H1 (cell line): ENCODE measurements at regions of chr17 and their contacts with region 1.

Region 1: DNA sequence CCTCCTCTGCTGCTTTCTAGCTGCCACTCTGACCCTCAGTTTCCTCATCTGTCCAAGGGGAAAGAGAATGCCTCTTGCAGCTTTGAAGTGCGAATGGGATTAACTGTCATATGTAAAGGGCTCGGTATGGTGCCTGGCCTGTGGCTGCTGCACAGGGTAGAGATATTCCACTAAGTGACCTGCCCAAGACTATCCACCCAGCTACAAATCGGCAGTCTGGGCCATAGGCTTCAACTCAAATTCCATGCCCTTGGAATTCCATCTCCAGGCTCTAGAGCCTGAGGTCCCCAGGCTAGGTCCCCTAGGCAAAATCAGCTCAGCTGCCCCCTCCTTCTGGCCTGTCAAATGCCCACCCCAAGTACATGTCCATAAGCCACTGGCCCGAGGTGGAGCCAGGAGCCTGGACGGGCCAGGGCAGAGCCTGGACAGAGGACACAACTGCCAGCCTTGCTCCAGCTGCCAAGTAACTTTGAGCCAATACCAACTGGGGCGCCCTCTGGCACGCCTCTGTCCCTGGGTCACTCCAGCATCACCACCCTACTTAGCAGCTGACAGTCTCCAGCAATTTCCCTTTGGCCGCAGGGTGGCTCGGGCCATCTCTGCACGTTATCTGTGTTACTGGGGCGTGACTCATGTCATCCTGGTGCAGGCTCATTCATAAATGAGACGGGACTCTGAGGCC is 57.2 kb downstream of the SDK2 start:
- DNase-seq: no peak
- H3K4me3 ChIP-seq: no peak overlapping the region; a peak in 1 of 8 replicates
- H3K27ac ChIP-seq: no peak overlapping the region
- H3K4me1 ChIP-seq: peaks cover 0 to 37% (median 13%) of the 10 kb centered on the region in 4 experiments; a peak in 6 of 7 replicates
- H3K27me3 ChIP-seq: no peaks in the 10 kb centered on the region; a peak in 1 of 7 replicates
- CTCF ChIP-seq: no peak
- EP300 ChIP-seq: no peak
- POLR2A ChIP-seq: no peak
- RAD21 ChIP-seq: no peak; a peak in 1 of 4 replicates

Region 2: GRCh38 chr17:73478768-73479424 is 108.2 kb before region 1 on chr17:
- CTCF ChIA-PET with region 1: interaction called, 14 read pairs
- POLR2A ChIA-PET with region 1: no interaction called
- DNase-seq: peak in 1 of 2 experiments; percentile 65
- H3K4me3 ChIP-seq: no peak overlapping the region
- H3K27ac ChIP-seq: no peak overlapping the region
- H3K4me1 ChIP-seq: peaks cover 0 to 12% (median 4%) of the 10 kb centered on the region in 4 experiments; a peak in 3 of 7 replicates
- H3K27me3 ChIP-seq: peaks cover 0 to 2% (median 0%) of the 10 kb centered on the region in 4 experiments; a peak in 1 of 7 replicates
- CTCF ChIP-seq: peak; percentile 73 to 88 (median 82)
- EP300 ChIP-seq: no peak
- POLR2A ChIP-seq: no peak
- RAD21 ChIP-seq: peak; percentile 67 to 77

Region 3: GRCh38 chr17:73551759-73552158 is 35.3 kb before region 1 on chr17:
- CTCF ChIA-PET with region 1: interaction called, 39 read pairs
- POLR2A ChIA-PET with region 1: no interaction called
- DNase-seq: no peak
- H3K4me3 ChIP-seq: no peak overlapping the region
- H3K27ac ChIP-seq: no peak overlapping the region
- H3K4me1 ChIP-seq: peaks cover 0 to 25% (median 14%) of the 10 kb centered on the region in 4 experiments; a peak in 6 of 7 replicates
- H3K27me3 ChIP-seq: no peaks in the 10 kb centered on the region; a peak in 1 of 7 replicates
- CTCF ChIP-seq: no peak
- EP300 ChIP-seq: no peak
- POLR2A ChIP-seq: no peak
- RAD21 ChIP-seq: no peak

Region 4: GRCh38 chr17:73560661-73561060 is 26.4 kb before region 1 on chr17:
- CTCF ChIA-PET with region 1: interaction called, 39 read pairs
- POLR2A ChIA-PET with region 1: no interaction called
- DNase-seq: no peak
- H3K4me3 ChIP-seq: no peak overlapping the region
- H3K27ac ChIP-seq: no peak overlapping the region
- H3K4me1 ChIP-seq: peaks cover 2 to 24% (median 13%) of the 10 kb centered on the region in 4 experiments
- H3K27me3 ChIP-seq: no peaks in the 10 kb centered on the region
- CTCF ChIP-seq: peak; percentile 29 to 59 (median 56); a peak in 3 of 4 replicates
- EP300 ChIP-seq: no peak
- POLR2A ChIP-seq: no peak
- RAD21 ChIP-seq: peak; percentile 41 to 59; a peak in 3 of 4 replicates

Region 5: GRCh38 chr17:73566905-73567782 is 19.9 kb before region 1 on chr17:
- CTCF ChIA-PET with region 1: interaction called, 15 read pairs
- POLR2A ChIA-PET with region 1: interaction called, 8 read pairs
- DNase-seq: peak; percentile 43 to 70
- H3K4me3 ChIP-seq: peak overlapping the region in 1 of 4 experiments; percentile 41; a peak in 2 of 8 replicates
- H3K27ac ChIP-seq: peak overlapping the region; percentile 79
- H3K4me1 ChIP-seq: peaks cover 13 to 39% (median 22%) of the 10 kb centered on the region in 4 experiments
- H3K27me3 ChIP-seq: no peaks in the 10 kb centered on the region
- CTCF ChIP-seq: no peak; a peak in 1 of 4 replicates
- EP300 ChIP-seq: no peak; a peak in 1 of 3 replicates
- POLR2A ChIP-seq: no peak
- RAD21 ChIP-seq: peak; percentile 14 to 45; a peak in 3 of 4 replicates

Region 6: DNA sequence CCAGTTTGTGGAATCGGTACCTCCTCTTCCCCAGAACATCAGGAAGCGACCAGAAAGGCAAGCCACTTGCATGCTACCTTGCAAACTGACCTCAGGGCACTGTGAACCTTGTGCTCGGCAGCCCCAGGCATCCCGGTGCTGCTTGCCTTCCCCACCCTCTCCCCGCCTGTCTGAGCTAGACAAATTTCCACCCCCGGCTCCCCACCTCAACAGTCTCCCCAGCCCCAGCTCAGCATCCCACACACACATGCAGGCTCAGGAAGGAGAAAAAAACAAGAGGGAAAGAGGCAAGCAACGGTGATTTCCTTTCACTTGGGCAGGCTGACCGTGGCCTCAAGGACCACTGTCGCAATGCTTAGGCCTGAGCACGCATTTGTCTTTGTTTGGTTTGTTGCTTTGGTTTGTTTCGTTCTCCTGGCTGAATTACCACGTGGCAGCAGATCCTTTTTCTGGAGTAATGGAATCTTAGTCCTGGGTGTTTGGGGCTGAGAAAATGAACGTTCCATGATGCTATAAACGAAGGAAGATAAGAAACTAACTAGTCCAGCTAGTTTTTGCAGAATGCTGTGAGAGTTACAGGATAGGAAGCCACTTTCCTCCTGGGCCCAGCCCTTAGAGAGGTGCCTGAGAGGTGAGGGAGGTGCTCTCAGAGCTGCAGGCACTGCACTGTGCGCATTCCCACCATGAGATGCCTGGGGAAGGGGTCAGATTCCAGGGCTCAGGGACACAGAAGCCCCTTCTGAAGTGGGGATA is 29.2 kb after region 1 on chr17:
- CTCF ChIA-PET with region 1: interaction called, 14 read pairs
- POLR2A ChIA-PET with region 1: interaction called, 3 read pairs
- DNase-seq: no peak
- H3K4me3 ChIP-seq: no peak overlapping the region
- H3K27ac ChIP-seq: no peak overlapping the region
- H3K4me1 ChIP-seq: peaks cover 22 to 53% (median 38%) of the 10 kb centered on the region in 4 experiments
- H3K27me3 ChIP-seq: no peaks in the 10 kb centered on the region; a peak in 1 of 7 replicates
- CTCF ChIP-seq: no peak
- EP300 ChIP-seq: no peak
- POLR2A ChIP-seq: no peak
- RAD21 ChIP-seq: no peak

Region 7: GRCh38 chr17:73759734-73760438 is 172.8 kb after region 1 on chr17:
- CTCF ChIA-PET with region 1: no interaction called
- POLR2A ChIA-PET with region 1: no interaction called
- DNase-seq: no peak
- H3K4me3 ChIP-seq: peak overlapping the region in 2 of 4 experiments; percentile 19 to 48; a peak in 4 of 8 replicates
- H3K27ac ChIP-seq: no peak overlapping the region
- H3K4me1 ChIP-seq: peaks cover 0 to 20% (median 1%) of the 10 kb centered on the region in 4 experiments; a peak in 3 of 7 replicates
- H3K27me3 ChIP-seq: no peaks in the 10 kb centered on the region; a peak in 1 of 7 replicates
- CTCF ChIP-seq: no peak
- EP300 ChIP-seq: no peak
- POLR2A ChIP-seq: no peak
- RAD21 ChIP-seq: no peak